ENCODE measurements at regions of chr7 and their contacts with region 1.

Region 1: GRCh38 chr7:20417260-20417659 is 86.6 kb downstream of the ITGB8 start:
- DNase-seq: no peak
- ATAC-seq: no peak
- H3K4me3 ChIP-seq: no peak overlapping the region
- H3K27ac ChIP-seq: no peak overlapping the region
- H3K4me1 ChIP-seq: no peaks in the 10 kb centered on the region
- H3K27me3 ChIP-seq: no peaks in the 10 kb centered on the region
- CTCF ChIP-seq: no peak

Region 2: GRCh38 chr7:20438694-20439376 is 21.6 kb after region 1 on chr7:
- intact Hi-C with region 1: loop called in 1 of 2 experiments (anchors 1 kb)
- DNase-seq: no peak
- ATAC-seq: no peak
- H3K4me3 ChIP-seq: no peak overlapping the region
- H3K27ac ChIP-seq: no peak overlapping the region
- H3K4me1 ChIP-seq: no peaks in the 10 kb centered on the region
- H3K27me3 ChIP-seq: no peaks in the 10 kb centered on the region
- CTCF ChIP-seq: no peak

Region 3: GRCh38 chr7:20450536-20450935 is 33.3 kb after region 1 on chr7:
- intact Hi-C with region 1: no loop called
- DNase-seq: no peak
- ATAC-seq: no peak
- H3K4me3 ChIP-seq: no peak overlapping the region
- H3K27ac ChIP-seq: no peak overlapping the region
- H3K4me1 ChIP-seq: no peaks in the 10 kb centered on the region
- H3K27me3 ChIP-seq: no peaks in the 10 kb centered on the region
- CTCF ChIP-seq: no peak

Measured in psoas muscle (tissue), 8 donors.